Heart right ventricle (tissue), 16 donors: ENCODE measurements at regions of chr11 and their contacts with region 1.

Region 1: DNA sequence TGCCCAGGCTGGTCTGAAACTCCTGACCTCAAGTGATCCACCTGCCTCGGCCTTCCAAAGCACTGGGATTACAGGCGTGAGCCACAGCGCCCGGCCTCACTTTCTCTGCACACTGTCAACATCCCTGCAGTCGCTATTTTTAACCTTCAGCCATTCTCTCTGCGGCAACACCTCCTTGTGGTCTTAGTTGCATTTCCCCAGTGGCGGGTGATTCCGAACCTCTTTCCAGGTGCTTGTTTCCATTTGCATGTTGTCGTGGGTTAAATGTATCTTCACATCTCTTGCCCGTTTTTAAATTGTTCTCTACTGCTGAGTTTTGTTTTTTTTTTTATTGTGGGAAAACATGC is 2.2 kb upstream of the SCT start:
- DNase-seq: no peak
- ATAC-seq: peak in 7 of 8 donors; percentile 40 to 76 (median 56)
- H3K4me3 ChIP-seq: no peak overlapping the region
- H3K27ac ChIP-seq: peak overlapping the region in 1 of 10 donors; percentile 25
- H3K4me1 ChIP-seq: peaks cover 0 to 12% (median 4%) of the 10 kb centered on the region in 9 donors
- H3K27me3 ChIP-seq: peaks cover 0 to 39% (median 22%) of the 10 kb centered on the region in 7 donors
- CTCF ChIP-seq: peak in 5 of 9 donors; percentile 21 to 51 (median 48)

Region 2: DNA sequence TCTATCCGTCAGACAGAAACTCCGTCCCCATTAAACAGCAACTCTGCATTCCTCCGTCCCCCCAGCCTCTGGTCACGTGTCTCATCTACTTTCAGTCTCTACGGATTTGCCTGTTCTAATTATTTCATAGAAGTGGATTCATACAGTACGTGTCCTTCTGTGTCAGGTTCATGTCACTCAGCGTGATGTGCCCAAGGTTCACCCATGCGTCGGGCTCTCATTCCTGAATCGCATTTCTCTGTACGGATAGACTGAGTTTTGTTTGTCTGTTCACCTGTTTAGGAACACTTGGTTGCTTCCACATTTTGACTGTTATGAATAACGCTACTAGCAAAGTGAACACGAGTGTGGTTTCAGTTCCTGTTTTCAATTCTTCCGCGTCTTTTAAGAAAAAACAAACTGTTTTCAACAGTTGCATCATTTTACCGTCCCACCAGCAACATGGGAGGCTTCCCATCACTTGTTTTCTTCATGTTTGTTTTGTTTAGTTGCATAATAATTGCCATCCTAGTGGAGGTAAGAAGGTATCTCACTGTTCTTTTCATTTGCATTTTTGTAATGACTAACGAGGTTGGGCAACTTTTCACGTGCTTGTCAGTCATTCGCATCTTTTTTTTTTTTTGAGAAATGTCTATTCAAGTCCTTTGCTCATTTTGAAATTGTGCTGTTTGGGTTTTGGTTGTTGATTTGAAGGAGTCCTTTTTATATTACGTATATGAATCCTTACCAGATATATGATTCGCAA is 359.9 kb before region 1 on chr11:
- intact Hi-C with region 1: no loop called
- DNase-seq: no peak
- ATAC-seq: peak in 7 of 8 donors; percentile 32 to 63 (median 49)
- H3K4me3 ChIP-seq: peak overlapping the region in 4 of 10 donors; percentile 11 to 55 (median 36)
- H3K27ac ChIP-seq: peak overlapping the region in 8 of 10 donors; percentile 9 to 97 (median 57)
- H3K4me1 ChIP-seq: peaks cover 0 to 35% (median 0%) of the 10 kb centered on the region in 9 donors
- H3K27me3 ChIP-seq: peaks cover 0 to 32% (median 15%) of the 10 kb centered on the region in 7 donors
- CTCF ChIP-seq: no peak

Region 3: GRCh38 chr11:488999-489398 is 140.2 kb before region 1 on chr11:
- intact Hi-C with region 1: no loop called
- DNase-seq: no peak
- ATAC-seq: no peak
- H3K4me3 ChIP-seq: no peak overlapping the region
- H3K27ac ChIP-seq: no peak overlapping the region
- H3K4me1 ChIP-seq: no peaks in the 10 kb centered on the region
- H3K27me3 ChIP-seq: no peaks in the 10 kb centered on the region
- CTCF ChIP-seq: no peak

Region 4: GRCh38 chr11:535519-536454 is 93.4 kb before region 1 on chr11 and contains the start of gene HRAS:
- intact Hi-C with region 1: loop called in 1 of 10 experiments (anchors 10 kb)
- DNase-seq: peak; percentile 92 to 96
- ATAC-seq: peak; percentile 89 to 97 (median 94)
- H3K4me3 ChIP-seq: peak within 1 kb of the TSS; percentile 64 to 95 (median 86)
- H3K27ac ChIP-seq: peak within 1 kb of the TSS in 9 of 10 donors; percentile 73 to 88 (median 82)
- H3K4me1 ChIP-seq: peaks cover 15 to 51% (median 39%) of the 10 kb centered on the region in 9 donors
- H3K27me3 ChIP-seq: peaks cover 0 to 25% (median 14%) of the 10 kb centered on the region in 7 donors
- CTCF ChIP-seq: no peak
- total RNA-seq, gene HRAS: 44.7 to 61.1 (median 54.5) TPM

Region 5: DNA sequence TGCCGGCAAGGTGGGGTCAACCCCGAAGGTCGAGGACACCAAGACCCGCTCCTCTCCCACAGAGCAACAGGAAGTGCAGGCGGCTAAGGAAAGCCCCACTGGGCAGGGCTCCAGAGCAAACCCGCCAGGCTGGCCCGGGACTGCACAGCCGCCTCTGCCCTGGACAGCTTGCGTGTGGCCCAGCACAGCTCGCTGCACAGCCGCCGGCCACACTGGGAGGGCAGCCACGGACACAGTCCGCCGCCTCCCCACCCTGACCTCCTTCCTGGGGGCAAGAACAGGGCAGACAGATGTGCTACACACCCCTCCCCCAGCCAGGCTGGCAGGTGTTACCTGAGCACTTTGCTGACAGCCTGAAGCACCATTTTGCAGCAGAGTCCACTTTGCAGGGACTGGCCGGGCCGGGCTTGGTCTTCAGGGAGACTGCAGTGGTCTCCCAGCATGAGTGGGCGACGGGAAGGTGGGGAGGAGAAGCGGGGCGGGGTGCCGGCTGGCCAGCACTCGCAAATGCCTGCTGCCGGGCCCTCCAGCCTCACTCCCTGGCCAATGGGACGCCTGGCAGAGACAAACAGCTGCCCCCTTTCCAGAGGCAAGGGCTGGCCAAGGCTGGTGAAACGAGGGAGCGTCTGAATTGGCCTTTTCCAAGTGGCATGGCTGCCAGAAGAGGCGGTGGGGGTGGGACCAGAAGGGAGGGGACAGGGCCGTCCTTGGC is 857.1 kb after region 1 on chr11 and contains the start of gene MOB2:
- intact Hi-C with region 1: no loop called
- DNase-seq: peak; percentile 39 to 50
- ATAC-seq: peak; percentile 46 to 65 (median 56)
- H3K4me3 ChIP-seq: peak within 1 kb of the TSS in 7 of 10 donors; percentile 8 to 43 (median 30)
- H3K27ac ChIP-seq: peak within 1 kb of the TSS in 9 of 10 donors; percentile 10 to 66 (median 34)
- H3K4me1 ChIP-seq: peaks cover 53 to 86% (median 74%) of the 10 kb centered on the region in 9 donors
- H3K27me3 ChIP-seq: no peaks in the 10 kb centered on the region
- CTCF ChIP-seq: no peak
- total RNA-seq, gene MOB2: 36.8 to 59.1 (median 45.2) TPM